ENCODE measurements at regions of chr5 and their contacts with region 1.

Region 1: GRCh38 chr5:19058216-19058615 is 929.8 kb downstream of the CDH18 start:
- DNase-seq: no peak
- H3K4me3 Mint-ChIP-seq: no peak overlapping the region
- H3K27ac Mint-ChIP-seq: no peak overlapping the region
- H3K4me1 Mint-ChIP-seq: no peaks in the 10 kb centered on the region
- H3K27me3 Mint-ChIP-seq: no peaks in the 10 kb centered on the region
- CTCF ChIP-seq: no peak

Region 2: DNA sequence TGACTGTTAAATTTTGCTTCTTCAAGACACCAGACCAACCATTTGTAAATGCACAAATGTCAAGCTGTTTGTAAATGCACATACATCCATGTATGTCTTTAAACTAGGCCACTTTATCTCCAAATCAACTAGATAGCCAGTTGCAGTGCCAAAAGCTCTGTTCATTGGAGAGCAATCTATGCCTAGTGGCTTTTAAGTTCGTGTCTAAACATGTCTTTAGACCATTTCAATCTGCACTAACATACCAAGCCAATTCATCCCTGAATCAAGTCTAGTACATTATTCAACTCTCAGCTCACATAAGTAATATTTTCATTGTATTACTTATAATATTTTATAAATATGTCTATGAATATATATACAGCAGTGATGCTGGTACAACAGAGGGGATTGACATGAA is 56.1 kb before region 1 on chr5:
- CTCF ChIA-PET with region 1: no interaction called
- intact Hi-C with region 1: loop called (anchors 5 kb)
- DNase-seq: no peak
- H3K4me3 Mint-ChIP-seq: no peak overlapping the region
- H3K27ac Mint-ChIP-seq: no peak overlapping the region
- H3K4me1 Mint-ChIP-seq: no peaks in the 10 kb centered on the region
- H3K27me3 Mint-ChIP-seq: no peaks in the 10 kb centered on the region
- CTCF ChIP-seq: no peak

Region 3: DNA sequence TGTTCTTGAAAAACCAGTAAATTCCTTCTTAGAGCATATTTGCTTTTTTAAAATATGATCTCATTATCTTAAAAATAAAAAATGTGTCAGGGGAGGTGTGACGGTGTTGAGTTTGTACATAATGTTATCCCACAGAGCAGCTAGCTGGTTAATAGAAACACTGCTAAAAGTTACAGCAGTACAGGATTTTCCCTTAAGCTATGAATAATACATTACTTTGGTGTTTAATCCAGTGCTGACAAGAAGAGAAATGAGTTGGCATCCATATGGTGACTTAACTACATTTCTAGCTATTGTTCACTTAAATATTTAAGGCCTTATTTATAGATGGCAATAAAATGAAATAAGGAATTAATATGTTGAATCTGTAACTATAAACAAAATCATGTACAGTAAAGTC is 46.7 kb after region 1 on chr5:
- CTCF ChIA-PET with region 1: no interaction called
- intact Hi-C with region 1: loop called (anchors 10 kb)
- DNase-seq: no peak
- H3K4me3 Mint-ChIP-seq: no peak overlapping the region
- H3K27ac Mint-ChIP-seq: no peak overlapping the region
- H3K4me1 Mint-ChIP-seq: no peaks in the 10 kb centered on the region
- H3K27me3 Mint-ChIP-seq: no peaks in the 10 kb centered on the region
- CTCF ChIP-seq: no peak